AG04450 (cell line): ENCODE measurements at regions of chr3 and their contacts with region 1.

Region 1: DNA sequence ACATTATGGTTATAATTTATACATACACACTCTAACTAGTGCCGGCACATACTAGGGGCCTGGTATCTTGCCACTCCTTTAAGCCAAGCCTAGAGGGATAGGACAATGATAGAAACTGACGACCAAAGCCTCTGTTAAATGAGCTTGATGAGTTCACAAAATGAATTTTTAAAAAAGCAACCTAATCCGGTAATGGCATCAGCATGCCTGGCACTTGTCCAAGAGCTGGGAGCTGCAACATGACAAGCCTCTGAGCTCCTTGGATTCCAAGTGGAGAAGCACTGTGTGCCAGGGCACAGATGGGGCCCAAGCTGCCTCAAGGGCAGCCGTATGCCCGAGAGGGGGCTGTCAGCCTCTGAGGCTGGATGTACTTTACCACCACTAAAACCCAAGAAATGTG is 9.7 kb downstream of the ETV5 start:
- DNase-seq: peak; percentile 45
- H3K4me3 ChIP-seq: no peak overlapping the region
- H3K27ac ChIP-seq: no peak overlapping the region
- H3K27me3 ChIP-seq: no peaks in the 10 kb centered on the region
- CTCF ChIP-seq: no peak

Region 2: GRCh38 chr3:185929192-185930151 is 169.7 kb before region 1 on chr3:
- CTCF ChIA-PET with region 1: no interaction called
- POLR2A ChIA-PET with region 1: interaction called, 13 read pairs
- DNase-seq: no peak
- H3K4me3 ChIP-seq: peak overlapping the region; percentile 3
- H3K27ac ChIP-seq: no peak overlapping the region
- H3K27me3 ChIP-seq: no peaks in the 10 kb centered on the region
- CTCF ChIP-seq: no peak

Region 3: GRCh38 chr3:186044427-186044826 is 54.8 kb before region 1 on chr3:
- CTCF ChIA-PET with region 1: interaction called, 10 read pairs
- POLR2A ChIA-PET with region 1: no interaction called
- DNase-seq: no peak
- H3K4me3 ChIP-seq: no peak overlapping the region
- H3K27ac ChIP-seq: no peak overlapping the region
- H3K27me3 ChIP-seq: peaks cover 3% of the 10 kb centered on the region
- CTCF ChIP-seq: no peak

Region 4: DNA sequence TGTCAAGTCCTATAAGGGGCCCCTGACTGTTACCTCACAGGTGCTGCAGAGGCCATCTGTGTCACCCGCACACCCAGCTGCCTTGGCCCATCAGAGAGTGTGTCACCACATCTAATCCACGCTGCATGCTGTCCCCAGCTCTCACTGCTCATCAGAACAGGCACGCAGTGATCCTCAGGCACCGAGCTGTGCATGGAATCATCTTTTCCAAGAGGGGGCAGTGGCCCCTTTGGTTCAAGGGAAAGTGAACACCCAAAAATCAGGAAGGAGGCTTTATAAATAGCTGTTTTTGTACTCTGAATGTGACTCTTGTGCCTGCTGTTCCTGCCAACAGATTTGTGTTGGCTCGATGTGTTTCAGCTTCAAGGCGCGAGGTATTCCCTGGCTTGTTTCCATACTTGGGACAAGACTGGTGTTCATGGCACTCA is 120.0 kb after region 1 on chr3:
- CTCF ChIA-PET with region 1: interaction called, 12 read pairs
- POLR2A ChIA-PET with region 1: no interaction called
- DNase-seq: no peak
- H3K4me3 ChIP-seq: no peak overlapping the region
- H3K27ac ChIP-seq: no peak overlapping the region
- H3K27me3 ChIP-seq: peaks cover 20% of the 10 kb centered on the region
- CTCF ChIP-seq: no peak

Region 5: GRCh38 chr3:186226482-186226881 is 127.3 kb after region 1 on chr3:
- CTCF ChIA-PET with region 1: interaction called, 10 read pairs
- POLR2A ChIA-PET with region 1: no interaction called
- DNase-seq: no peak
- H3K4me3 ChIP-seq: no peak overlapping the region
- H3K27ac ChIP-seq: no peak overlapping the region
- H3K27me3 ChIP-seq: peaks cover 24% of the 10 kb centered on the region
- CTCF ChIP-seq: no peak